Endothelial cell of umbilical vein (primary cell): ENCODE measurements at regions of chr20 and their contacts with region 1.

Region 1: DNA sequence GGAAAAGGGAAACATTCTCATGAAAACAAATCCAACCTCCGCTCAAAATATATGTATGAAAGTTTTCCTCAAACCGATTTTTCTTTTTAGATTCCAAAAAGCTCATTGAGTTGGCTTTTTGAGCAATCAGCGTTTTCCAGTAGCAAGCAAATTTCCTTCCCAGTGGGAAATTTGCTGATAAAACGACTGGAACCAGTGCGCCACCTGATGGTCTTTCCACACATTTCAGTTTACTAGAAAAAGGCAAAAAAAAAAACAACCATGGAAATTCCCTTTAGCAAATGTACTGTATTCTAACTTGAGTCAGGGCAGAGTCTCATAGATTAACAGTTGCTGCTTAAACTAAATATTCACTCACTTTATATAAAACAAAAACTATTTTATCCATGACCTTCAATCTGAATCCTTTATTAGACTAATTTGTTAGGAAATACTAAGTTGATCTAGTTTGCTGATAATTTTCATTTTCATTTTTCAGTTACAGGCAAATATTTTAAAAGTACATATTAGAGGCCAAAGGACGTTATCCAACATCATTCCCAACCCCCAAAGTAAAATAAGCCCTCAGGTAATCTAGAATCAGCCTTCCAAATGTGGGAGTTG is 271.5 kb downstream of the FOXA2 start:
- DNase-seq: peak; percentile 60
- H3K4me3 ChIP-seq: no peak overlapping the region
- H3K27ac ChIP-seq: no peak overlapping the region
- H3K4me1 ChIP-seq: no peaks in the 10 kb centered on the region
- H3K27me3 ChIP-seq: no peaks in the 10 kb centered on the region
- CTCF ChIP-seq: peak; percentile 50 to 62
- POLR2A ChIP-seq: no peak

Region 2: GRCh38 chr20:21702553-21703470 is 610.0 kb before region 1 on chr20:
- CTCF ChIA-PET with region 1: interaction called, 6 read pairs
- POLR2A ChIA-PET with region 1: no interaction called
- dilution Hi-C with region 1: no loop called
- intact Hi-C with region 1: loop called (anchors 1 kb)
- DNase-seq: peak; percentile 41
- H3K4me3 ChIP-seq: no peak overlapping the region
- H3K27ac ChIP-seq: no peak overlapping the region
- H3K4me1 ChIP-seq: no peaks in the 10 kb centered on the region
- H3K27me3 ChIP-seq: peaks cover 73 to 82% of the 10 kb centered on the region in 2 experiments
- CTCF ChIP-seq: peak; percentile 46 to 69
- POLR2A ChIP-seq: no peak

Region 3: DNA sequence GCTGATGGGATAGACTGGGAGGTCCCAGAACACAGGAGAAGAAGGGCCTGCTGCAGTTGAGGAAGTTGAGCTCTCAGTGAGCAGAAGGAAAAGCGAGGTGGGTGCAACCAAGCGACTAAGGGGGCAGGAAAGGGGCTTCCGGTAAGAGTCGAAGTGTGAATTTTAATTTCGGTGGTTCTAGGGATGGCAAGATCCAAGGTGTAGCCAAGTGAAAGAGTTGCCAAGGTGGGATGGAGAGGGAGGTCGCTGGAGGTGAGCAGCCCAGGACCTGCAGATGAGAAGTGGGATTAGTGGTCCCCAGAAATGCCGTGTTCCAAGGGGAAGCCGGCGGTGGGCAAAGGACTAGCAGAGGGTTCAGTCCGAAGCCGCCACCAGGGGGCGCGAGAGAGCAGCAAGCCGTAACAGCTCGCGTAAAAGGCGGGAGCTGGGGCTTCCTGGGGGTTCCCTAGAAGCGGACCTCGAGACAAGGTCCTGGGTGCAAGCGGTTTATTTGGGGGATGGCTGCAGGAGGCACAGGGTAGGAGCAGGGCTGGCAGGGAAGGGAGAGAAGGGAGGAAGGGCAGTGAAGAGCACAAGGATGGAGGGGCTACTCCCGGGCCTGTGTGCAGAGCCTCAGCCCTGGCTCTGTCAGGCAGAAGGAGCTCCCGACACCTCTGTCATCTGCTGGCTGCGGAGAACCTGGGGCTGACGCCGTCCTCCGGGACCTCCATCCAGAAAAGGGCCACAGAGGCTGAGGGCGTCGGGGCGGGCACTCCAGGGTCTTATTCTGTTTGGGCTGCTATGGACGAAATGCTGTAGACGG is 503.8 kb before region 1 on chr20:
- CTCF ChIA-PET with region 1: no interaction called
- POLR2A ChIA-PET with region 1: no interaction called
- dilution Hi-C with region 1: no loop called
- intact Hi-C with region 1: loop called (anchors 5 kb)
- DNase-seq: no peak
- H3K4me3 ChIP-seq: no peak overlapping the region
- H3K27ac ChIP-seq: no peak overlapping the region
- H3K4me1 ChIP-seq: no peaks in the 10 kb centered on the region
- H3K27me3 ChIP-seq: no peaks in the 10 kb centered on the region
- CTCF ChIP-seq: peak; percentile 22 to 41
- POLR2A ChIP-seq: no peak